Aorta (tissue), 5 donors: ENCODE measurements at regions of chr19 and their contacts with region 1.

Region 1: DNA sequence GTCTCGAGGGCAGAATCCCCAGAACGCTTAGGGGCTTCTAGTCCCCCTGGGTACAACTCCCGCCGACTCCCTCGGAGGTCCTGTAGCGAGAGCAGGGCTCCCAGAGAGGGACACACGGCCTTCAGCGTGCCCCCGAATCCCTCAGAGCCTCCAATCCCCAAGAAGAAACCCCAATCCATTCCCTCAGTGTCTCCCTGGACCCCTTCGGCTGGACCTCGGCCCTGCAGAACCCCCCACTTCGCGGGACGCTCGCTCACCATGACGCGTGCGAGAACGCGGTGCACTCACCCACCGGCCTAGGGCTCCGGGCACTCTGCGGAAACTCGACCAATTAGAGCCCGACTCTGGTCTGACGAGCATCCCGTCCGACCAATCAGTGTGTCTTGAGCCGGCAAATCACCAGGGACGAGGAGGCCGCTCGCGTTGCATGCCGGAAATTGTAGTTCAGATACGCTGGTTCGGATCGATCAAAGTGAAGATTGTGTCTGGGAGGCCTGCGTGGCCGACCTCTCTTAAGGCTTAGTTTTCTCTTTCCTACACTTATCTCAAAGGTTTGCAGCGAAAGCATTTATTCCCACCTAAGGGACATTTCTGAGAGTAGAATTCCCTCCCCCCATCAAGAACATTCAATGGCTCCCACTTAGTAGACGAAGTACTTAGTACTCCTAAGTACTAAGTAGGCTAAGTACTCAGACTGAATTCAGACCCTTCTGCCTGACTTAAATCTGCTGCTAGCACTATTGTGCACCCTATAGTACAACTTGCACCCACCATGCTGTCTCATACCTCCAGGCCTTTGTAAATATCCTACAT is at the start of gene TMEM161A:
- DNase-seq: peak; percentile 98
- ATAC-seq: peak; percentile 98
- H3K4me3 ChIP-seq: peak within 1 kb of the TSS; percentile 23 to 39
- H3K27ac ChIP-seq: no peak within 1 kb of the TSS
- H3K4me1 ChIP-seq: no peaks in the 10 kb centered on the region
- H3K27me3 ChIP-seq: no peaks in the 10 kb centered on the region
- total RNA-seq, gene TMEM161A: 11.6 to 18.1 TPM

Region 2: DNA sequence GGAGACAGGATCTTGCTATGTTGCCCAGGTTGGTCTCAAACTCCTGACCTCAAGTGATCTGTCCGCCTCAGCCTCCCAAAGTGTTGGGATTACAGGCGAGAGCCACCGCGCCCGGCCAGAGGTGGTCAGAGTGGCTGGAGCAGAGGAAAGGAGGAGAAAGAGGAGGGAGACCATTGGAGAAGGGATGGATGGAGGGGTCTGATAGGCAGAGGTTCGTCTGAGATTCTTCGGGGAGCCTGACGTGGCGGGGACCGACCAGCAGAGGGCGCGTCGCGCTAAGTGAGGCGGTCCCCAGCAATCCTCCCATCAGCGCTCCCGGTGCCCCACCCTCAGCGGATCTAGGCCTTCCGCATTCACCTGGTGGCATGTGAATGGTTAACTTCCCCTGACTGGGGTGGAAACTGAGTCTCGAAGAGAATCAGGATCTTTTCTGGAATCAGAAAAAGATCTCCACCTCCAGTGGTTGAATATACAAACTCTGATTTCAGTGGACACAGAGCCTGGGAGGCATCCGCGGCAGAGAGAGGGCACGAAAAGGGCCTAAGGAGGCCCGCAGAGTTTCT is 1792.2 kb before region 1 on chr19:
- intact Hi-C with region 1: no loop called
- DNase-seq: peak; percentile 82 to 95
- ATAC-seq: peak; percentile 89
- H3K4me3 ChIP-seq: no peak overlapping the region
- H3K27ac ChIP-seq: no peak overlapping the region
- H3K4me1 ChIP-seq: peaks cover 3 to 4% of the 10 kb centered on the region in 2 donors
- H3K27me3 ChIP-seq: no peaks in the 10 kb centered on the region

Region 3: GRCh38 chr19:19010551-19010950 is 127.8 kb before region 1 on chr19:
- intact Hi-C with region 1: no loop called
- DNase-seq: peak in 1 of 2 donors; percentile 17
- ATAC-seq: no peak
- H3K4me3 ChIP-seq: no peak overlapping the region
- H3K27ac ChIP-seq: no peak overlapping the region
- H3K4me1 ChIP-seq: no peaks in the 10 kb centered on the region
- H3K27me3 ChIP-seq: no peaks in the 10 kb centered on the region

Region 4: DNA sequence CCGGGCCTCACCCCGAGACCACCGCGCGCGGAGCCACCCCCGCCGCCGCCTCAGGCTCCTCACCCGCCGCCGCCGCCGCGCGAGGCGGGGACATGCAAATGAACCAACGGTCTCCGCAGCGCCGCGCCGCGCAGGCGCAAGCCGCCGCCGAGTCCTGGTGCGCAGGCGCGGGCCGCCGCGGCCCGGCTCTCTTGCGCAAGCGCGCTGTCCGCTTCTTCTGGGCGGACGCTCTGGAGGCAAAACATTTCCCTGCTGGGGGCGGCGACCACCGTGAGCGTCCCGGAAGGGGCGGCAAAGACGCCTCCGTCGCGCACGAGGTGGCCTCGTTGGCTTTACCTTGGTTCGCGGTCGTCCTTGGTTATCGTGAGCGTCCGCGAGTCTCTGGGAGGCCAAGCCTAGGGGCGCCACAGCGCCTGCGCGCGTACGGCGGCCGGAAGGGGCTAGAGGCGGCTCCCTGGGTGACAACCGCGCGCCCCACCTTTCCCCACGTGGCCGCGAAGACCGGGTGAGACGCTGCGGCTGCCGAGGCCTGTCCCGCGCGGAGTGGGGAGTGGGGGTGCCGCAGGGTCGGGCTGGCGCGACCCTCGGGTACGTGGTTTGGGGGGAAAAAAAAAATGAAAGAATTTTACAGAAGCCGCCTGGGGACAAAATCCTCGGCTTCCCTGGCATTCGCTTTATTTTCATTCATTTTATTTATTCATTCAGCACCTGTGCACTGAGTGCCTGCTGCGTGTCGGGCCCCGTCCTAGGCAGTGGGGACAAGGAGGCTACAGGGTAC is 104.8 kb before region 1 on chr19 and contains the starts of genes ARMC6 and SUGP2:
- intact Hi-C with region 1: loop called in 1 of 2 experiments (anchors 5 kb)
- DNase-seq: peak; percentile 90 to 94
- ATAC-seq: peak; percentile 94
- H3K4me3 ChIP-seq: peak within 1 kb of the TSS; percentile 78 to 91
- H3K27ac ChIP-seq: peak within 1 kb of the TSS; percentile 46 to 89
- H3K4me1 ChIP-seq: no peaks in the 10 kb centered on the region
- H3K27me3 ChIP-seq: no peaks in the 10 kb centered on the region
- total RNA-seq, gene ARMC6: 11.7 to 13.1 TPM
- total RNA-seq, gene SUGP2: 61.0 to 93.1 TPM

Region 5: DNA sequence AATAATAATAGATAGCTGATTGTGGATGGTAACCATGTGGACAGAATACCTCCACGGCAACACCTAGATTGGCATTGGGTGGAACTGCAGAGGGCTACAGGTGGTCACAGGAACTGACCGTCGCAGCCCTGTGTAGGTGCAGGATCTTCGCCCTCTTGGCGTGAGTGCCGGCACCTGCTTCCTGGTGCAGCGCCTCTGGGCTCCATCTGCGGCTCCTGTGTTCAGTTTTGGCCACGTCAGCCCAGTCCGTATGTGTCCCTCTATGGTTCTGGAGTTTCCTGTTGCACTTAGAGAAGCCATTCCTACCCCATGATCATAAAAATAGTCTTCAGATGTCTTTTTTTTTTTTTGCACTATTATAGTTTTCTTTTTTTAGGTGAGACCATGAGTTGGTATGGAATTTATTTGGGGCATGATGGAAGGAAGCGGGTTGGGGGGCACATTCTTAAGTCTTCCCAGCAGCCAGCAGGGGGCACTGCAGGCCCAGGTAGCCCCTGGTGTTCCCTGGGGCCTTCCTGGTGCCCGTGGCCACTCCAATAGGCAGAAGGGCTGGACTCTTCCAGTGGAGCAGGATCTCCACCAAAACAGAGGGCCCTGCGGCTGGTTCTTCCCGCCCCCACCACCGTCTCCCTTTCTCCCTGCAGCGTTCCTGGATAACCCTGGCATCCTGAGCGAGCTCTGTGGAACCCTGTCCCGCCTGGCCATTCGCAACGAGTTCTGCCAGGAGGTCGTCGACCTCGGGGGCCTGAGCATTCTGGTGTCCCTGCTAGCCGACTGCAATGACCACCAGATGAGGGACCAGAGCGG is 84.7 kb before region 1 on chr19:
- intact Hi-C with region 1: loop called in 1 of 2 experiments (anchors 2 kb)
- DNase-seq: peak; percentile 69 to 86
- ATAC-seq: peak; percentile 61
- H3K4me3 ChIP-seq: no peak overlapping the region
- H3K27ac ChIP-seq: no peak overlapping the region
- H3K4me1 ChIP-seq: no peaks in the 10 kb centered on the region
- H3K27me3 ChIP-seq: no peaks in the 10 kb centered on the region

Region 6: DNA sequence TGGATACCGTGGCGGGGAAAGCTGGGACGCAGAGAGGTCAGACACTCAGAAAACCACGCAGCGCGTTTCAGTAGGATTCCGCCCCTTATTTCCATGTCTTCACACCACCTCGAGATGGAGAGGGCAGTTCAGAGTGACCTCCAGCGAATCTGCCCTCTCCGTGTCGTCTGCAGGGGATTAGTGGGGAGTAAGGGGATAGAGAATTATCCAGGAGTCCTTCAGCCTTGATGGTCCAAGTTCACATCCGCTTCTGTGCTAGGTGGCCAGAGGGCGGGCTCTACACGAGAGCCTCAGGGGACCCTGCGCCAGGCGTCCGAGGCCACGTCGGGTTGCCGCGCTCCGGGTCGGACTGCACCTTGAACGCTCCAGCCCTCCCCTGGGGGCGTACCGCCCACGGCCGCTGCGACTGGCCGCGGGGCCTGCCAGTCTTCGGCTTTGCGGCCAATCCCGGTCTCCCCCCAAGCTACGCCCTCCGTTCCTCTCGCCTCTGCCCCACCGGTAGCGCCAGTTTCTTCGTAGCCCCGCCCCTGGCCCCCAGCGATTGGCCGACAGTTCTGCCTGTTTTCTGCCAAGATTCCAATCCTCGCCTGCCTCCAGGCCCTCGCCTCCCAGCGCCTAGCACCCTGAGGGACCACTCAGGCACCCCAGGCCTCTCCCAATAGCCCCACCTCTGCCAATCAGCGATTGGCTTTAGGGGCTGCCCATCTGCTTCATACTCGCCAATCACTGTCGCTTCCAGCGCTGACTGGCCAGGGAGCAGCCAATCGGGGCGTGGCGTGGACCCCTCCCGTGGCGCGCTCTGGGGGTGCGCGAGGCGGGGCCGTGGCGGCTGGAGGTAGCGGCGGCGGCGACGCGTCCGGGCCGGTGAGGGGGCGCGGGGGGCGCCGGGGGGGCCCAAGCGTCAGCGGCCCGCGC is 74.9 kb before region 1 on chr19 and contains the start of gene SLC25A42:
- intact Hi-C with region 1: loop called in 1 of 2 experiments (anchors 5 kb)
- DNase-seq: peak; percentile 99 to 100
- ATAC-seq: peak; percentile 98
- H3K4me3 ChIP-seq: peak within 1 kb of the TSS; percentile 55 to 81
- H3K27ac ChIP-seq: peak within 1 kb of the TSS in 1 of 2 donors; percentile 33
- H3K4me1 ChIP-seq: no peaks in the 10 kb centered on the region
- H3K27me3 ChIP-seq: no peaks in the 10 kb centered on the region
- total RNA-seq, gene SLC25A42: 9.4 to 10.3 TPM